B cell (primary cell): ENCODE measurements at regions of chr12 and their contacts with region 1.

Region 1: GRCh38 chr12:48936379-48936979 is 11.2 kb upstream of the FKBP11 start:
- DNase-seq: peak; percentile 81
- ATAC-seq: peak; percentile 57
- H3K4me3 ChIP-seq: no peak overlapping the region
- H3K4me3 Mint-ChIP-seq: no peak overlapping the region
- H3K27ac ChIP-seq: no peak overlapping the region
- H3K27ac Mint-ChIP-seq: peak overlapping the region; percentile 4
- H3K4me1 ChIP-seq: peaks cover 16 to 34% of the 10 kb centered on the region in 2 donors
- H3K4me1 Mint-ChIP-seq: peaks cover 37% of the 10 kb centered on the region
- H3K27me3 ChIP-seq: no peaks in the 10 kb centered on the region
- H3K27me3 Mint-ChIP-seq: no peaks in the 10 kb centered on the region
- CTCF ChIP-seq: peak; percentile 97

Region 2: DNA sequence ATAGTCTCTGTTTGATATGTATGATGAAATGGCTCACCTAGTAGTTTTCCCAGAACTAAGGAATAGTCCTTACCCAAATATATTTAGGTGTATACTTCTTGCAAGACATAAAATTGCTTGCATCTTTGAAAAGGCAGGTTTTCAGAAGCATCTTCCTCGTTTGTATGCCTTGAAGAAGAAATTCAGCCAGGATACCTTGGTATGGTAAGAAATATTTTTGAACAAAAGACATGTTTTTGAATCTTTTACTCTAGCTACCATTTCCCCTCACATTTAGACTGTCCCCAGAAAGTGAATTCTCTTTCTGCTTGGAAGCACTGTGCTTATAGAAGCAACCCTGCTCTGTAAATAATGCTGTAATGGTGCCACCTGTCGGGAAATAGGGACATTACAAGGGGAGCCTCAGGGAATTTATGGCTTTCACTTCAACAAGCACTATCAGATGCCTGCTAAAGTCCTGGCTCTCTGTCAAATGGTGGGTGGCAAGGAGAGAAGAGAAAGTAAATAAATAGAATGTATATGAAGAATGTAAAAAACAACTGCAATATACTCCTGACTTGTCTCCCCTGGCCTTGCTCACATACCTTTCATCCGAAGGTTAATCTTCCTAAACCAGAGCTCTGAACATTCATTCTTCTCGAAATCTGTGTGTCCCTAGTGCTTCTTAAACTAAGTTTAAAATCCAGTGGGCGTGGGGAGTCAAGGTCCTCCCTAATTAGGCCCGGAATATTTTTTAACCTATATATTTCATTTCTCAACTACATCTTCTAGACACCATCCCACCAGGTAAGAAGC is 747.0 kb before region 1 on chr12:
- CTCF ChIA-PET with region 1: no interaction called
- POLR2A ChIA-PET with region 1: no interaction called
- intact Hi-C with region 1: no loop called
- DNase-seq: peak; percentile 81
- ATAC-seq: peak; percentile 88
- H3K4me3 ChIP-seq: no peak overlapping the region
- H3K4me3 Mint-ChIP-seq: no peak overlapping the region
- H3K27ac ChIP-seq: no peak overlapping the region
- H3K27ac Mint-ChIP-seq: no peak overlapping the region
- H3K4me1 ChIP-seq: peaks cover 12% of the 10 kb centered on the region in 2 donors
- H3K4me1 Mint-ChIP-seq: peaks cover 11% of the 10 kb centered on the region
- H3K27me3 ChIP-seq: peaks cover 0 to 15% (median 5%) of the 10 kb centered on the region in 4 experiments
- H3K27me3 Mint-ChIP-seq: peaks cover 21% of the 10 kb centered on the region
- CTCF ChIP-seq: peak; percentile 93

Region 3: GRCh38 chr12:48903982-48904411 is 32.5 kb before region 1 on chr12:
- CTCF ChIA-PET with region 1: interaction called, 9 read pairs
- POLR2A ChIA-PET with region 1: no interaction called
- intact Hi-C with region 1: loop called (anchors 5 kb)
- DNase-seq: peak; percentile 84
- ATAC-seq: peak; percentile 91
- H3K4me3 ChIP-seq: peak overlapping the region in 4 of 5 experiments; percentile 11 to 49 (median 40)
- H3K4me3 Mint-ChIP-seq: peak overlapping the region; percentile 83
- H3K27ac ChIP-seq: no peak overlapping the region
- H3K27ac Mint-ChIP-seq: no peak overlapping the region
- H3K4me1 ChIP-seq: peaks cover 11 to 12% of the 10 kb centered on the region in 2 donors
- H3K4me1 Mint-ChIP-seq: peaks cover 7% of the 10 kb centered on the region
- H3K27me3 ChIP-seq: peaks cover 0 to 5% (median 2%) of the 10 kb centered on the region in 4 experiments
- H3K27me3 Mint-ChIP-seq: peaks cover 19% of the 10 kb centered on the region
- CTCF ChIP-seq: peak; percentile 60

Region 4: DNA sequence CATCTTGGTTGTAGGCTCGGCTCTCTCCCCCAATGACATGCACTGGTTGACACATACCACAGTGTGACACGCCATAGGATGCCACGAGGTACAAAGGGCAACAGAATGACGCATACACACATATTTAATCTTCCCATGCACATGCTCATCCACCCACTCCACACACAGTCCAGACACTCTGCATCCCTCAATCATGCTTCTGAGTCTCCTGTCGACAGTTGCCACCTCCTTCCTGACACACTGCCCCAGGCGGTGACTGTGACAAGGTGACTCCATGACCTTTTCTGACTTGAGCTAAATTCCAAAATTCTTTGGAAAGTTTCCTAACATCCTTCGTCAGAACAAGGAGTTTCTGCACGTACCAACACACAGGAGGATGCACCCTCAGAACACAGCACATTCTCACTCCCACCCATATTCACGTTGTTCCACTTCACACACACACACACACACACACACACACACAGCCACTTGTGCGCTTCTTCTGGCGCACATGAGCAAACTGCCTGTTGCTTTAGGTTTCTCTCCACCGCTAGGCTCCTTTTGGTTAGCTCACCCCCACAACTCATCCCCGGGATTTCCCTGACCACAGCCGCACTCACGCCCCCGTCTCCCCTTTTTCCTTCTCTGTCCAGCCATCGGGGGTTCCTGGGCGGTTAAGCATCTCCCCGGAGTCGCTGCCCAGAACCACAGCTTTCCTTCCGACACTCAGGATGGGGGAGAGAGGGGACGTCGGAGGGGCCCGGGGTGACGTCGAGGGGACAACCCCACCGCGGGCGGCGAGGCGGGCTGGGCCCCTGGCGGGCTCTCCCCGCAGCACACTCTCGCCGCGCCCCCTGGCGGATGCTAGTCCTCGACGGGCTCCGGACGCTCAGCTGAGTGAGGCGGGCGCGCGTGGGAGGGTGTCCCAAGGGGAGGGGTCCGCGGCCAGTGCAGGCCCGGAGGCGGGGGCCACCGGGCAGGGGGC is 41.1 kb after region 1 on chr12:
- CTCF ChIA-PET with region 1: interaction called, 18 read pairs
- POLR2A ChIA-PET with region 1: no interaction called
- intact Hi-C with region 1: no loop called
- DNase-seq: peak; percentile 90
- ATAC-seq: peak; percentile 69
- H3K4me3 ChIP-seq: peak overlapping the region in 3 of 5 experiments; percentile 60 to 86 (median 65)
- H3K4me3 Mint-ChIP-seq: peak overlapping the region; percentile 72
- H3K27ac ChIP-seq: no peak overlapping the region
- H3K27ac Mint-ChIP-seq: peak overlapping the region; percentile 73
- H3K4me1 ChIP-seq: peaks cover 55 to 56% of the 10 kb centered on the region in 2 donors
- H3K4me1 Mint-ChIP-seq: peaks cover 57% of the 10 kb centered on the region
- H3K27me3 ChIP-seq: peaks cover 2 to 90% (median 54%) of the 10 kb centered on the region in 4 experiments
- H3K27me3 Mint-ChIP-seq: peaks cover 74% of the 10 kb centered on the region
- CTCF ChIP-seq: peak; percentile 92